ENCODE measurements at regions of chr3 and their contacts with region 1.

Region 1: GRCh38 chr3:114336122-114336697 is 42.4 kb downstream of the TIGIT start:
- DNase-seq: no peak
- ATAC-seq: no peak
- H3K4me3 Mint-ChIP-seq: no peak overlapping the region
- H3K27ac Mint-ChIP-seq: peak overlapping the region; percentile 76
- H3K4me1 Mint-ChIP-seq: peaks cover 59% of the 10 kb centered on the region
- H3K27me3 Mint-ChIP-seq: no peaks in the 10 kb centered on the region

Region 2: DNA sequence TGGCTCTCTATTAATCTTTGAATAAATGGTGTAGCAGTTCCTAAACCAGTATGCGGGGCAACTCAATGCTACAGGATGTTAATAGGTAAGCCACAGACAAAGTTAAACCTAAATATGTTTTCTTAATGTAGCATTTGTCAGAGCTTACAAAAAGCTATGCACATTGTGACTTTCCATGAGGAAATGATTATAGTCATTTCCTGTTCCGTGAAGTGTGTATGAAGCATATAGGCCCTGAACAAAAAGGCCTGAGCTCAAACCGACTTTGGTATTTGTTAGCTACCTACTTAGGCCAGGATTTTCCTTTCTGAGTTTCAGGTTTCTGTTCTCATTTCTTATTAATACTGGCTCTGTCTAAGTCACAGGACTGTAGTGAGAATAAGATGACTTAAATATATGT is 113.1 kb before region 1 on chr3:
- CTCF ChIA-PET with region 1: no interaction called
- POLR2A ChIA-PET with region 1: no interaction called
- intact Hi-C with region 1: loop called in 1 of 2 experiments (anchors 2 kb)
- DNase-seq: no peak
- ATAC-seq: peak; percentile 74
- H3K4me3 Mint-ChIP-seq: no peak overlapping the region
- H3K27ac Mint-ChIP-seq: peak overlapping the region; percentile 89
- H3K4me1 Mint-ChIP-seq: peaks cover 78% of the 10 kb centered on the region
- H3K27me3 Mint-ChIP-seq: no peaks in the 10 kb centered on the region

Region 3: GRCh38 chr3:114290911-114291901 is 45.0 kb before region 1 on chr3:
- CTCF ChIA-PET with region 1: interaction called, 16 read pairs
- POLR2A ChIA-PET with region 1: no interaction called
- intact Hi-C with region 1: loop called (anchors 2 to 5 kb)
- DNase-seq: peak; percentile 94
- ATAC-seq: peak; percentile 76
- H3K4me3 Mint-ChIP-seq: peak overlapping the region; percentile 51
- H3K27ac Mint-ChIP-seq: peak overlapping the region; percentile 91
- H3K4me1 Mint-ChIP-seq: peaks cover 34% of the 10 kb centered on the region
- H3K27me3 Mint-ChIP-seq: no peaks in the 10 kb centered on the region

Region 4: GRCh38 chr3:114308830-114309229 is 27.4 kb before region 1 on chr3:
- CTCF ChIA-PET with region 1: interaction called, 13 read pairs
- POLR2A ChIA-PET with region 1: no interaction called
- intact Hi-C with region 1: loop called in 1 of 2 experiments (anchors 1 kb)
- DNase-seq: peak; percentile 69
- ATAC-seq: peak; percentile 75
- H3K4me3 Mint-ChIP-seq: peak overlapping the region; percentile 40
- H3K27ac Mint-ChIP-seq: peak overlapping the region; percentile 95
- H3K4me1 Mint-ChIP-seq: peaks cover 56% of the 10 kb centered on the region
- H3K27me3 Mint-ChIP-seq: no peaks in the 10 kb centered on the region

Region 5: DNA sequence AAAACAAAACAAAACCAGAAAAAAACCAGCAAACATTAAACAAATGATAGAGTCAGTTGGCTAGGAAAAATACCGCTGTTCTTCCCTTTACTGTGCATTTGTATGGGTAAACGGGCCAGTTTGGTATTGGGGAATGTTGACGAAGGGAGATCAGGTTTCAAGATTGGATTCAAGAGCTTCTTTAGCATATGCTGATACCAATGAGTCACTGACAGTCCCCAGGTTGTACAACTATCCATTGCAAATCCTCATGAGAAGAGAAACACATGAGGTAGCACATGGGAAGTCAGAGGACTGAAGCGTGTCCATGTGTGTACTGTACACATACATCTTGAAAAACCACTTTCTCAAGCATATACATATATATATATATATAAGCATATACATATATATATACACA is 16.8 kb before region 1 on chr3:
- CTCF ChIA-PET with region 1: interaction called, 8 read pairs
- POLR2A ChIA-PET with region 1: no interaction called
- intact Hi-C with region 1: loop called in 1 of 2 experiments (anchors 2 kb)
- DNase-seq: no peak
- ATAC-seq: no peak
- H3K4me3 Mint-ChIP-seq: no peak overlapping the region
- H3K27ac Mint-ChIP-seq: no peak overlapping the region
- H3K4me1 Mint-ChIP-seq: peaks cover 64% of the 10 kb centered on the region
- H3K27me3 Mint-ChIP-seq: no peaks in the 10 kb centered on the region